A673 (cell line): ENCODE measurements at regions of chr4 and their contacts with region 1.

Region 1: GRCh38 chr4:137735561-137736104 is 203.3 kb upstream of the PCDH18 start:
- DNase-seq: no peak
- H3K4me3 ChIP-seq: no peak overlapping the region
- H3K27ac ChIP-seq: no peak overlapping the region
- H3K4me1 ChIP-seq: no peaks in the 10 kb centered on the region
- H3K27me3 ChIP-seq: no peaks in the 10 kb centered on the region
- CTCF ChIP-seq: no peak

Region 2: DNA sequence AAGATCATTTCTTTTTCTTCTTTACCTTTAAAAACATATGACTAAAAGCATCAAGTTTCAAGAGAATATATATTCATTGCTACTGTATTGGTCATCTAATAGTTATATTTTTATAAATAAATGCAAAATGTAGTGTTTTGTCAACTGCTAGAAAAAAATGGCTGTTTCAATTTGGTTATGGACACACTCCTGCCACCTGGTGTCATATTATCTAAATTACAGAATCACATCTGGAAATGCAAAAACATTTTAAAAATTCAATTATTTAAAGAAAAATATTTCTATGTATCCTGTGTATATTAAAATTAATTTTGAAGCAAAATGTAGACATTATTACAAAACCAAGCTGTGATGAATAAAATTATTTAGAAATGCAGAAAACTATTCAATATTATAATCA is 126.0 kb after region 1 on chr4:
- CTCF ChIA-PET with region 1: no interaction called
- POLR2A ChIA-PET with region 1: no interaction called
- intact Hi-C with region 1: loop called (anchors 1 kb)
- DNase-seq: peak; percentile 6
- H3K4me3 ChIP-seq: no peak overlapping the region
- H3K27ac ChIP-seq: no peak overlapping the region
- H3K4me1 ChIP-seq: no peaks in the 10 kb centered on the region
- H3K27me3 ChIP-seq: no peaks in the 10 kb centered on the region
- CTCF ChIP-seq: peak; percentile 63

Region 3: DNA sequence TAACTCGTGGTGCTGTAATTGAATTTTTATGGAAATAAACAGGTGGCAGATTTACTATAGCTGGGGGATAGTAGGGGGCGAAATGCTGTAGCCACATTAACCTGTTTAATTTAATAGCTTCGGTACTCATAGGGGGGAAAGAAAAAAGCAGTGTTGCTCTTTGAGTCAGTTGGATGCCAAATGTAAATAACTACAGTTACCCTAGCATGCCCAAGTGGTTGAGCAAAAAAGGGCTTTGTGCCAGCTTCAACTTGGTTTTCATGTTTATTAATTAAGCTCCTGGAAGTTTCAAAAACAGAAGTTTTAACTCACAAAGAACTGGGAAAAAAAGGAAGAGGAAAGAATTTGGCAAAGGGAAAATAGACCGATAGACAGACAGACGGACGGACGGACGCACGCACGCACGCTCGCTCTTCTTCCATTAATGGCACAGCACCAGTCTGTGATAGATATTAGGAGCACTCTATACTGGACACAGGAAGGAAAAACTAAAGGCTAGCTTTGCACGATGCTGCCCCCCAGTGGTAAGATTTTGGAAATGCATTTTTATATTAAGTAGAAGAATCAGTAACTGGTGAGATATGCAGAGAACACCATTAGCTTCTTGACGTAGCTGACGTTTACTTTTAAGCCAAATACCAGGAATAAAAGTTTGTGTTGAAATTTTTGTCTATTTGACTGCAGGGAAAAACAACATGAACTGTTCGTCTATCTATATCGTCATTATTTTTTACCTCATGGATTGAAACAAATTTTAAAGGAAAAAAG is 354.7 kb after region 1 on chr4:
- CTCF ChIA-PET with region 1: no interaction called
- POLR2A ChIA-PET with region 1: no interaction called
- intact Hi-C with region 1: loop called (anchors 1 kb)
- DNase-seq: peak; percentile 88
- H3K4me3 ChIP-seq: peak overlapping the region; percentile 38
- H3K27ac ChIP-seq: no peak overlapping the region
- H3K4me1 ChIP-seq: peaks cover 5% of the 10 kb centered on the region
- H3K27me3 ChIP-seq: no peaks in the 10 kb centered on the region
- CTCF ChIP-seq: peak; percentile 80

Region 4: GRCh38 chr4:138870737-138871554 is 1135.3 kb after region 1 on chr4:
- CTCF ChIA-PET with region 1: no interaction called
- POLR2A ChIA-PET with region 1: no interaction called
- intact Hi-C with region 1: loop called (anchors 5 kb)
- DNase-seq: peak; percentile 85
- H3K4me3 ChIP-seq: no peak overlapping the region
- H3K27ac ChIP-seq: no peak overlapping the region
- H3K4me1 ChIP-seq: no peaks in the 10 kb centered on the region
- H3K27me3 ChIP-seq: no peaks in the 10 kb centered on the region
- CTCF ChIP-seq: peak; percentile 88